ENCODE measurements at regions of chr15 and their contacts with region 1.

Region 1: GRCh38 chr15:42273102-42273899 is at the starts of genes GANC and TMEM87A:
- DNase-seq: peak; percentile 98
- H3K4me3 Mint-ChIP-seq: peak within 1 kb of the TSS; percentile 97
- H3K27ac Mint-ChIP-seq: peak within 1 kb of the TSS; percentile 99
- H3K4me1 Mint-ChIP-seq: peaks cover 24% of the 10 kb centered on the region
- H3K27me3 Mint-ChIP-seq: no peaks in the 10 kb centered on the region
- CTCF ChIP-seq: no peak
- total RNA-seq, gene GANC: 24.0 and 31.7 TPM in 2 replicates
- total RNA-seq, gene TMEM87A: 51.3 and 52.3 TPM in 2 replicates

Region 2: DNA sequence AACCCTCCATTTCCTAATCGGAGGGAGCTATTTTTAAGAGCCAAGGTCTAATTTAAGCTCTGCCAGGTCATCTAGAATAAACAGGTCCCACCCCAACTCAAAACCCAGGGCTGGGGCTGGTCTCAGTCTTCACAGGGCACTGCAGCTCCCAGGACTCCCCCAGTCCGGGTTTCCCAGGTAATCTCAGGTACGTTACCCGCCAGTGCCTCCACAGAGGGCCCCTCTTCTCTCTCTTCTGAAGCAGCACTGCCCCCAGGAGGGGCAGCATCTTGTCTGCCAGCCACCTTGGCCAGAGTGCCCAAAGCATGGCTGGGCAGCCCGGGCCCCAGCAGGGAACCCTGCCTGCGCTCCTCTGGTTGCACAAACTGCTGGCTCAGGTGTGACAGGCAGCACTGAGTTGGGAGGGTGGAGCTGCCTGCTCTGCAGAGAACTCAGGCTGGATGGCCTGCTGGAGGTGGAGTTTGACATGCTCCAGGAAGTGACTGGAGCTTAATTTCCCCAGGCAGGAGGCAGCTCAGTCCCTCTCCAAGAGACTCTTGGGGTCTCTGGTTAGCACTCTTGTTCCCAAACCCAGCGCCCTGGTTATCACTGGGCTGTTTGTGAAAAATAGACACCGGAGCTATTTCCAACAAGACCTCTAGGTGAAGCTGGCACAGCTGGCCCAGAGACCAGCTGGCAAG is 116.9 kb before region 1 on chr15 and contains the start of gene PLA2G4F:
- CTCF ChIA-PET with region 1: interaction called, 3 read pairs
- POLR2A ChIA-PET with region 1: interaction called, 10 read pairs
- intact Hi-C with region 1: no loop called
- DNase-seq: peak; percentile 32
- H3K4me3 Mint-ChIP-seq: peak within 1 kb of the TSS; percentile 31
- H3K27ac Mint-ChIP-seq: no peak within 1 kb of the TSS
- H3K4me1 Mint-ChIP-seq: peaks cover 26% of the 10 kb centered on the region
- H3K27me3 Mint-ChIP-seq: no peaks in the 10 kb centered on the region
- CTCF ChIP-seq: no peak
- total RNA-seq, gene PLA2G4F: 0.30 TPM in 1 of 2 replicates, not detected in the other

Region 3: GRCh38 chr15:42207674-42208579 is 65.4 kb before region 1 on chr15 and contains the start of gene VPS39:
- CTCF ChIA-PET with region 1: no interaction called
- POLR2A ChIA-PET with region 1: interaction called, 30 read pairs
- intact Hi-C with region 1: no loop called
- DNase-seq: peak; percentile 75
- H3K4me3 Mint-ChIP-seq: peak within 1 kb of the TSS; percentile 95
- H3K27ac Mint-ChIP-seq: peak within 1 kb of the TSS; percentile 92
- H3K4me1 Mint-ChIP-seq: peaks cover 26% of the 10 kb centered on the region
- H3K27me3 Mint-ChIP-seq: no peaks in the 10 kb centered on the region
- CTCF ChIP-seq: no peak
- total RNA-seq, gene VPS39: 47.1 and 53.9 TPM in 2 replicates

Region 4: DNA sequence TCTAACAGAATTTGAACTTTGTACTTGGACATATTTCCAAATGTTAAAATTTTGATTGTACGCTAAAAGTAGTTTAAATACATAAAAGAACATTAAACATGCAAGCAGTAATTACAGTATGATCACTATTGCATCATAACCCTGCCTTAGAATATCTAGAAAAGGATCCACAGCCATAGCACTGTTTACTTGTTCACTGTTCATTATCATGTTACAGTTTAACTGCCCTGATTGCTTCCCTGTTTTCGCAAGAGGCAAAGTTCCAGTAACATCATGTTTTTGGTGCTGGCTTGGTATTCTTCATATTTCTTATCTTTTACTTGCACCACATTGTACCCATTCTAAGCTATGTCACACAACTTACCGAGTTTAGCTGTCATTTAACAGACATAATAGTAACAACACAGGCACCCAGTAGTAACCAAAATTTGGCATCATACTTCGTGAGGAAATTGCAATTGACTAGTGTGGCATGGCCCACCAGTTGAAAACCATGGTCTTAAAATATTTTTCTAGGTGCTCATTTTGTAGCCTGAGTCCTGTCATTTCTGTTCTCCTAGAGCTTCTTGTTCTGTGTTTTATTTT is 13.2 kb after region 1 on chr15:
- CTCF ChIA-PET with region 1: interaction called, 3 read pairs
- POLR2A ChIA-PET with region 1: interaction called, 39 read pairs
- intact Hi-C with region 1: no loop called
- DNase-seq: peak; percentile 46
- H3K4me3 Mint-ChIP-seq: no peak overlapping the region
- H3K27ac Mint-ChIP-seq: no peak overlapping the region
- H3K4me1 Mint-ChIP-seq: peaks cover 11% of the 10 kb centered on the region
- H3K27me3 Mint-ChIP-seq: no peaks in the 10 kb centered on the region
- CTCF ChIP-seq: no peak

Region 5: DNA sequence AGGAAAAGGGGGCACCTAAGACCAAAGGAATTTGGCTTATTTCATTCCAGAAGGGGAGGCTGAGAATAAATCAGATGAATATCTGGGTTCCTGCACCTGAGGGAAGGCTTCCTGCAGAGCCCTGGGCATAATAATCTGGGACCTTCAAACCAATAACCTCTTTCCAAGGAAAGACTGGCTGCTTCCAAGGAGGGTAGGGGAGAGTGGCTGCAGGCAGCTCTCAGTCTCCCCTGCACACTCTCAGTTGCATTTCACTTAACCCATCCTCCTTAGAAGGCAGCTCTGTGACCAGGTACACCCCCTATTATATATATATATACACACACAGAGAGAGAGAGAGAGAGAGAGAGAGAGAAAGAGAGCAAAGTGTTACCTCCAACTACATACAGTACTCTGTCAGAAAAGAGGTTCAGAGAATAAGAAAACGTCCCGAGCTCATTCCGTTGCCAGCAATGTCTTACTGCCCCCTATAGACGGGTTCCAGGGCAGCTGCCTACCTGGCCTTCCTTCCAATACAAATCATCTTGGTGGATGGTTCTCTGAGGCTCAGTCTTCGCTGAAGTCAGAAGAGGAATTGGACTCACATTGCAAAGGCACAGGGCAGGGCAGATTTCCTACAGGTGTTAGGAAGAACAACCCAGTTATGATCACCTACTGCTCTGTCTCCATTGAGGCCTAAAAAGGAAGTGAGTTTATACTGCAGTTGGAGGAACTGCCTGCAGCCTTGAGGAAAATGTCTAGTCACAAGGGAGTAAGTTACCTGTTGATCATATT is 112.1 kb after region 1 on chr15:
- CTCF ChIA-PET with region 1: no interaction called
- POLR2A ChIA-PET with region 1: no interaction called
- intact Hi-C with region 1: loop called (anchors 10 kb)
- DNase-seq: peak; percentile 60
- H3K4me3 Mint-ChIP-seq: no peak overlapping the region
- H3K27ac Mint-ChIP-seq: no peak overlapping the region
- H3K4me1 Mint-ChIP-seq: no peaks in the 10 kb centered on the region
- H3K27me3 Mint-ChIP-seq: no peaks in the 10 kb centered on the region
- CTCF ChIP-seq: peak; percentile 43

Region 6: GRCh38 chr15:42650208-42651066 is 377.1 kb after region 1 on chr15:
- CTCF ChIA-PET with region 1: interaction called, 3 read pairs
- POLR2A ChIA-PET with region 1: interaction called, 3 read pairs
- intact Hi-C with region 1: loop called (anchors 1 kb)
- DNase-seq: peak; percentile 88
- H3K4me3 Mint-ChIP-seq: no peak overlapping the region
- H3K27ac Mint-ChIP-seq: no peak overlapping the region
- H3K4me1 Mint-ChIP-seq: peaks cover 6% of the 10 kb centered on the region
- H3K27me3 Mint-ChIP-seq: no peaks in the 10 kb centered on the region
- CTCF ChIP-seq: peak; percentile 72

Measured in MCF 10A (cell line).